Transverse colon (tissue), 4 donors: ENCODE measurements at regions of chr13 and their contacts with region 1.

Region 1: DNA sequence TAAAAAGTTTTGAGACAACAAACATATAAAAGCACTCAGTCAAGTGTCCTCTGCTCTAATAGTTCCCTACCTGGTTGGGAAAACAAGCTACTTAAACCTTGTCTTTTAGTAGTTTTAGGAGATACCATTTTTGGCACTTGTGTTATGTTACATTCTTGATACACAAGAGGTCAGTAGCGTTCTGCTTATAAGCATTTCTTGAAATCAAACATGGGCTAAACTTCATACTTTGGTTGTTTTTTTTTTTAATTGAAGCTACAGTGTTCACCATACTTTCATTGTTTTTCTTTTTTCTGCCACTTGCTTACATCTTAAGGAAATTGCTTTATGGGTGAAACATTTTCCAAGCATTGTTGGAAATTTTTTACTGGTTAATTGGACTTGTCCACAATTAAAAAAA is 12.9 kb downstream of the NHLRC3 start:
- DNase-seq: no peak
- H3K4me3 ChIP-seq: no peak overlapping the region
- H3K27ac ChIP-seq: no peak overlapping the region
- H3K4me1 ChIP-seq: no peaks in the 10 kb centered on the region
- H3K27me3 ChIP-seq: no peaks in the 10 kb centered on the region
- CTCF ChIP-seq: peak in 2 of 5 experiments; percentile 15 to 18
- EP300 ChIP-seq: no peak
- POLR2A ChIP-seq: no peak

Region 2: GRCh38 chr13:39073992-39074391 is 22.8 kb after region 1 on chr13:
- in situ Hi-C with region 1: no loop called
- intact Hi-C with region 1: loop called (anchors 2 kb)
- DNase-seq: no peak
- H3K4me3 ChIP-seq: no peak overlapping the region
- H3K27ac ChIP-seq: no peak overlapping the region
- H3K4me1 ChIP-seq: no peaks in the 10 kb centered on the region
- H3K27me3 ChIP-seq: peaks cover 25% of the 10 kb centered on the region
- CTCF ChIP-seq: no peak
- EP300 ChIP-seq: no peak
- POLR2A ChIP-seq: no peak

Region 3: GRCh38 chr13:39110518-39111097 is 59.5 kb after region 1 on chr13:
- in situ Hi-C with region 1: no loop called
- intact Hi-C with region 1: no loop called
- DNase-seq: no peak
- H3K4me3 ChIP-seq: no peak overlapping the region
- H3K27ac ChIP-seq: no peak overlapping the region
- H3K4me1 ChIP-seq: no peaks in the 10 kb centered on the region
- H3K27me3 ChIP-seq: peaks cover 9% of the 10 kb centered on the region
- CTCF ChIP-seq: no peak
- EP300 ChIP-seq: no peak
- POLR2A ChIP-seq: no peak

Region 4: GRCh38 chr13:39552246-39552645 is 501.1 kb after region 1 on chr13:
- in situ Hi-C with region 1: no loop called
- intact Hi-C with region 1: no loop called
- DNase-seq: no peak
- H3K4me3 ChIP-seq: no peak overlapping the region
- H3K27ac ChIP-seq: no peak overlapping the region
- H3K4me1 ChIP-seq: no peaks in the 10 kb centered on the region
- H3K27me3 ChIP-seq: no peaks in the 10 kb centered on the region
- CTCF ChIP-seq: no peak
- EP300 ChIP-seq: no peak
- POLR2A ChIP-seq: no peak

Region 5: DNA sequence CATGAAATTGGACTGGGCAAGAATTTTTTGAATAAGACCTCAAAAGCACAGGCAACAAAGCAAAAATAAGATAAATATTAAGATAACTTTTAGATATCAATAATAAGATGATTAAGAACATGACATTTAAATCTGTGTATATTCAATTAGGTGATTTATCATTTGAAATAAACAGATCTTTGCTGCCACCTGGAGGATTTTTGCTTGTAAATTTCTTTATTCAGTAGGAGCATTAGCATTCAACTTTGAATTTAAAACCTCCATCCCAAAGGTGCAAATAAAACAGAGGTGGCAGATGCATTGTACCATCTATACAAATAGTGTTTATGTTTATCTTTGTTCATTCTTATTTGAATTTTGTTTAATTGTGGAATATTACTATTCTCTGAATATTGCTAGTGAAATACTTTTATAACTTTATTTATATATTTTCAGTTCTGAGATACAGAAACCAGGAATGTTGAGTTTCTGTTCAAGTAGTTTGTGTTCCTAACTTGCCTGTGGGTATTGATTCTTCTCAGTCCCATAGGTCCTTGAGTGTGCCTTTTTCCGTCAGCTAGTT is 625.2 kb after region 1 on chr13:
- in situ Hi-C with region 1: no loop called
- intact Hi-C with region 1: loop called (anchors 10 kb)
- DNase-seq: no peak
- H3K4me3 ChIP-seq: no peak overlapping the region
- H3K27ac ChIP-seq: no peak overlapping the region
- H3K4me1 ChIP-seq: peaks cover 0 to 5% (median 0%) of the 10 kb centered on the region in 4 donors
- H3K27me3 ChIP-seq: no peaks in the 10 kb centered on the region
- CTCF ChIP-seq: peak; percentile 36 to 45 (median 40)
- EP300 ChIP-seq: no peak
- POLR2A ChIP-seq: no peak